KBM-7 (cell line): ENCODE measurements at regions of chr7 and their contacts with region 1.

Region 1: GRCh38 chr7:38335492-38336147 is 62.2 kb upstream of the TARP start:
- DNase-seq: peak; percentile 95

Region 2: GRCh38 chr7:37916673-37917660 is 418.7 kb before region 1 on chr7 and contains the start of gene SFRP4:
- in situ Hi-C with region 1: loop called (anchors 25 kb)
- DNase-seq: peak; percentile 81

Region 3: DNA sequence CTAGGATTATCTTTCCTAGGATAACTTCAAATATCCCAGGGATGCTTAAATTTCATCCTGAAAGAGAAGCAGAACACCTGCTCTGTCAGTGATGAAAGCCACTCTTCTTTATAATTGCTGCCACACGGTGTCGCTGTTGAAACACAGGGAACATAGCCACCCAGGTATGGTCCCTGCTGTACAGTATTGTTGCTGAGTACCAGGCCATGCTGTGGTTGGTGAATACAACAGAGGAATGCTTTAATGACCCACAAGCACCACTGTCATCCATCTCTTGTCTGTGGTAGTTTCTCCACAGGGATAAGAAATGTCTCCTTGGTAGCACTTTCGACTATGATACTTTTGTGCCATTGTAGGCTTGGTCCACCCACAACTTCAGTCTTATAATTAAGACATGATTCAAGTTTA is 228.1 kb before region 1 on chr7:
- in situ Hi-C with region 1: loop called (anchors 25 kb)
- DNase-seq: peak; percentile 75

Region 4: DNA sequence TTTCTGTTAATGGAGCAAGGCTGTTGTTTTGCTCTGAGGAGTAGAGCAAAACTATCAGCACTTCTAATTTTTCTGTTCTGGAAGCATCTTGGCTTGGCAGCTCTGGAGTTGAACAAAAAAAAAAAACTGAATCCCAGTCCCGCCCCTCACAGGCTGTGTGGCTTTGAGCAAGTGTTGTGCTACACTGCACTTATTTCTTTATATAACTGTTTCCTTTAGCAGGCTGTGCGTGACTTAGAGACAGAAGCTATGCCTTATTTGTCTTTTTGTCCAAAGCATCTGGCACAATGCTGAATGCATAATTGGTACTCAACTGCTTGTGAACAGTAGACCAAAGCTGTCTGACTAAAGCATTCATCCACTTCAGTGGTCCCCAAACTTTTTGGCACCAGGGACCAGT is 199.5 kb after region 1 on chr7:
- in situ Hi-C with region 1: no loop called
- DNase-seq: no peak